ENCODE measurements at regions of chr17 and their contacts with region 1.

Region 1: GRCh38 chr17:56715613-56716357 is 117.9 kb downstream of the C17orf67 start:
- DNase-seq: peak; percentile 89
- ATAC-seq: peak; percentile 94

Region 2: GRCh38 chr17:56592487-56593085 is 123.2 kb before region 1 on chr17:
- intact Hi-C with region 1: loop called (anchors 10 kb)
- DNase-seq: peak; percentile 75
- ATAC-seq: peak; percentile 77

Region 3: GRCh38 chr17:56690486-56691291 is 25.1 kb before region 1 on chr17:
- intact Hi-C with region 1: no loop called
- DNase-seq: no peak
- ATAC-seq: no peak

Measured in sciatic nerve (tissue), 2 donors.